Activated T-helper 2 cell treated with anti-CD3 and anti-CD28 coated beads, Interferon-gamma antibody, Interleukin-2, Interleukin-4, amounts not matched to agents 10 μg/mL and 5 μg/mL and 100 μg/mL, durations not matched to agents 14 hours and 24 hours and 36 hours (primary cell): ENCODE measurements at regions of chr17 and their contacts with region 1.

Region 1: GRCh38 chr17:65231662-65232335 is 94.6 kb downstream of the RGS9 start:
- DNase-seq: peak; percentile 50
- H3K4me3 Mint-ChIP-seq: no peak overlapping the region
- H3K27ac Mint-ChIP-seq: peak overlapping the region; percentile 55
- H3K4me1 Mint-ChIP-seq: peaks cover 67% of the 10 kb centered on the region
- H3K27me3 Mint-ChIP-seq: no peaks in the 10 kb centered on the region

Region 2: DNA sequence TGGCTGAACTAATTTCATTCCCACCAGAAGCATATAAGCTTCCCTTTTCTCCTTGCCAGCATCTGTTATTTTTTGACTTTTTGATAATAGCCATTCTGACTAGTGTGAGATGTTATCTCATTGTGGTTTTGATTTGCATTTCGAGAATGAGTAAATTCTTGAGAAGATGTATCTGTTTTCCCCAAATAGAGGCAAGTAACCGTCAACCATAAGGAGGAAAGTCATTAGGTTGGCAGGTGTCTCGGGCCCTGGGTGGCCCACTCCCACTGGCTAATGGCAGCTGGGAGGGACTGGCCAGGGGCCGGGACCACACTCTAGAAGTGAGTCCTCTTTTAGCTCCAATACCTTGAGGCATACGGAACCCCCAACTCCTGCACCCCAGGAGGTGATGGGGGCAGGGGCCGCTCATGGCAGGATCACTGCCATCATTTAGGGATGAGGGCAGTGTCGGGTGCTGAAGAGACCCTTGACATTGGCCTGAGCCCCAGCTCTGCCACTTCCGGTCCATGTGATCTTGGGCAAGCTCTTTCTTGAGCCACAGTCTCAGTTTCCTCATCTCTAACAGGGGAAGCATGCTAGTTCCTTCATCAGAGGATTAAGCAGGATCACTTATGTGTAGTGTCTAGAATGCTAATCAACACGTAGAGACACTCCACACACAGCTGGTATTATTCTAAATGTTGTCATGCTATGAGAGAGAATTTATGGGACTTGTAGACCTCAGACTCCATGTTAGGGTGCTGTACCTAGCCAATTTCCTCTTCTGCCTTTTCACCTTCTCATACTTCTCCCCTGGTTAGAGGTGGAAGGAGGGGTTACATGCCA is 50.4 kb before region 1 on chr17:
- intact Hi-C with region 1: loop called (anchors 1 kb)
- DNase-seq: peak; percentile 55
- H3K4me3 Mint-ChIP-seq: peak overlapping the region; percentile 24
- H3K27ac Mint-ChIP-seq: peak overlapping the region; percentile 96
- H3K4me1 Mint-ChIP-seq: peaks cover 82% of the 10 kb centered on the region
- H3K27me3 Mint-ChIP-seq: no peaks in the 10 kb centered on the region

Region 3: DNA sequence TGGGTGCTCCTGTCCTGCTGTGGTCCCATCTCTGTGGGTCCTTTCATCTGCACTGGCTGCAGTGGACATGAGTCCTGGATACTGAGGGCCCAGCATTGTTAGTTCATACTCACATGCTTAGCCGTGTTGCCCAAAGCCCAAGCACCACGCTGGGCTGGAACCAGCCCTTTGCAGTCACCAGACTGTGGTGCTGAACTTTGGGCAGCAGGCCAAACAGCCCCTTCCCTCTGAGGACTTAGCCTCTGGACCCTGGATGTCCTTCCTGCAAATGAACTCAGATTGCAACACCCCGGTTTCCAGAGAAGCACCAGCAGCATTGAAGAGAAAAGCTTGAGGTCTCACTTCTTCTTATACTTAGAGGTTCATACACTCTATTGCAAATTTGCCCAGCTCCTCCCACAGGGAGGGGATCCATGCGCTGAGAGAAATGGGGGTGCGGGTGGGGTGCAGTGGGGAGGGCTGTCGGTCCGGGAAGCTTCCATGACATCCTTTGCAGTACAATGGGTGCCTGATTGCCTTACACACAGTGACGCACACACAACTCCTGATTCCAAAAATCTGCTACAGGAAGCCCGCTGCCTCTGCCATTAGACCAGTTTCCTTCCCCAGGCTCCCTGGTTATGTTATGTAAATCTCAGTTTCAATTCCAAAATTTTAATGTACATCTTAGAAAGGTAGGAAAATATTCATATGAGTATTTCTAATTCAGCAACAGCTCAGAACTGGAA is 28.8 kb before region 1 on chr17:
- intact Hi-C with region 1: no loop called
- DNase-seq: no peak
- H3K4me3 Mint-ChIP-seq: no peak overlapping the region
- H3K27ac Mint-ChIP-seq: no peak overlapping the region
- H3K4me1 Mint-ChIP-seq: peaks cover 21% of the 10 kb centered on the region
- H3K27me3 Mint-ChIP-seq: no peaks in the 10 kb centered on the region

Region 4: GRCh38 chr17:65261682-65262636 is 30.2 kb after region 1 on chr17:
- intact Hi-C with region 1: loop called (anchors 1 kb)
- DNase-seq: no peak
- H3K4me3 Mint-ChIP-seq: peak overlapping the region; percentile 20
- H3K27ac Mint-ChIP-seq: no peak overlapping the region
- H3K4me1 Mint-ChIP-seq: peaks cover 41% of the 10 kb centered on the region
- H3K27me3 Mint-ChIP-seq: peaks cover 8% of the 10 kb centered on the region

Region 5: DNA sequence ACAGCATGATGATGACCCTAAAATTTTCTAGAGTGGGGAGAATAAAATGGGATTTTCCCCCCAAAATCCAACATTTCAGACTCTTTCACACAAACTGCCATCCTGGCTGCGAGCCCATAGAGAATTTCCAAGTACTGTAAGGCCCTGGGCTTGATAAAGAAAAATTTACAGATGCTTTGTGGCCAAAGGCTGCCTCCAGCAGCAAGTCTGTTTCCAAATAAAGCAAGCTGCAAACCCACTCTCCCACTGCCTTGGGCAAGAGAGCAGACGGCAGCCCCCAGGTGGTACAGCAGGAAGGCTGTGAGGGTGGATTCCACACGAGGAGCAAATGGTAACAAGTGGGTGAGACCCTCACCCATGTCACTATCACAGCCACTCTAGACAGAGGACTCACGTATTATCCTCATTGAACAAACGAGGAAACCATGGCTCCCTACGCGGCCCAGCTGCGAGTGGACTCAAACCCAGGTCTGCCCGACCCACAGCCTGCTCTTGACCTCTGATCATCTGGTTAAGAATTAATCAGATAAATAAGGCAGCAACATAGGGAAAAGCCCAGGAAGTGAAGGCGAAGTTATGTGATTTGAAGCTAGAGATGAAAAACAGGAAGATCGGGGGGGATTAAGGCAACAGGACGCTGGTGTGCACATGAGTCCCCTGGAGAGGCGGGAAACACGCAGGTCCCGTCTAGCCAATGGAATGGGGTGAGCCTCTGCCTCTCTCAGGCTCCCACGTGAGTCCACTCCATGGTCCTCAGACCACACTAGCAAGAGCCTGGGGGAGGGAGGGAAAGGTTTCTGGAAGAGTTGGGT is 292.3 kb after region 1 on chr17:
- intact Hi-C with region 1: loop called (anchors 1 kb)
- DNase-seq: no peak
- H3K4me3 Mint-ChIP-seq: peak overlapping the region; percentile 53
- H3K27ac Mint-ChIP-seq: peak overlapping the region; percentile 79
- H3K4me1 Mint-ChIP-seq: peaks cover 24% of the 10 kb centered on the region
- H3K27me3 Mint-ChIP-seq: peaks cover 32% of the 10 kb centered on the region

Region 6: GRCh38 chr17:65794572-65794971 is 562.8 kb after region 1 on chr17:
- intact Hi-C with region 1: loop called (anchors 5 kb)
- DNase-seq: no peak
- H3K4me3 Mint-ChIP-seq: no peak overlapping the region
- H3K27ac Mint-ChIP-seq: no peak overlapping the region
- H3K4me1 Mint-ChIP-seq: peaks cover 10% of the 10 kb centered on the region
- H3K27me3 Mint-ChIP-seq: no peaks in the 10 kb centered on the region

Region 7: GRCh38 chr17:66165513-66166123 is 933.8 kb after region 1 on chr17:
- intact Hi-C with region 1: loop called (anchors 1 kb)
- DNase-seq: no peak
- H3K4me3 Mint-ChIP-seq: no peak overlapping the region
- H3K27ac Mint-ChIP-seq: no peak overlapping the region
- H3K4me1 Mint-ChIP-seq: peaks cover 2% of the 10 kb centered on the region
- H3K27me3 Mint-ChIP-seq: peaks cover 9% of the 10 kb centered on the region